CD4-positive, alpha-beta T cell (primary cell): ENCODE measurements at regions of chr14 and their contacts with region 1.

Region 1: DNA sequence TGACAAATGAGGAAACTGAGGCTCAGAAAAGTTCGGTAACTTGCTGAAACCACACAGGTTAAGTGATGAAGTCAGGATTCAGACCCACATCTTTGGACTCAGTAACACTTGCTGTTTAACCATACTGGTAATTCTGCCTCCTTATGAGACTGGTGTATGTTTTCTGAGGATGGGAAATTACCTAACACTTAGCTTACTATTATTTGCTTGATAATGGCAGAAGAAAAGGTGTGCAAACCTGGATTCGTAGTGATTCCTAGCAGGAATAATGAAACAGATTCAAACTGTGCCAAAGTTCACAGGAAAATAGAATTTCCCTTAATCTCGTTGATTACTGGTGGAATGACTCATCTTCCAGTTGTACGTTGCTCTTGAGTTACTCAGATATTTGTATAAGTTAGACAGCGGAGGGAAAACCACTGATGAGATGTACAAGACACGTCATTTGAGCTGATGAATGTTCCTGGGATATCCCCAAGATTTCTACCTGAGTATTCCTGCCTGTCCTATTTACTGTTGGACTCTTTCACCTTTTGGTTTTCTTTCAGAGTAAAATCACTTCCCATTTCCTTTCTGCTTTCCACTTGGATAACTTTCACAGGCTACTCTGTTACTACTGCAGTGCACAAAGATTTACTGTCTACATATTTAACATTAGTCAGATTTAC is 37.5 kb downstream of the PRORP start:
- DNase-seq: peak in 2 of 14 experiments; percentile 33 to 45
- ATAC-seq: no peak
- H3K4me3 ChIP-seq: no peak overlapping the region
- H3K4me3 Mint-ChIP-seq: no peak overlapping the region
- H3K27ac ChIP-seq: peak overlapping the region in 1 of 2 donors; percentile 5
- H3K27ac Mint-ChIP-seq: peak overlapping the region; percentile 20
- H3K4me1 ChIP-seq: peaks cover 8% of the 10 kb centered on the region
- H3K4me1 Mint-ChIP-seq: peaks cover 52% of the 10 kb centered on the region
- H3K27me3 ChIP-seq: no peaks in the 10 kb centered on the region
- H3K27me3 Mint-ChIP-seq: no peaks in the 10 kb centered on the region
- CTCF ChIP-seq: no peak

Region 2: GRCh38 chr14:35201066-35201465 is 41.2 kb after region 1 on chr14:
- CTCF ChIA-PET with region 1: no interaction called
- POLR2A ChIA-PET with region 1: no interaction called
- intact Hi-C with region 1: loop called in 1 of 2 experiments (anchors 5 kb)
- DNase-seq: peak in 4 of 14 experiments; percentile 23 to 66 (median 45)
- ATAC-seq: peak; percentile 33
- H3K4me3 ChIP-seq: no peak overlapping the region
- H3K4me3 Mint-ChIP-seq: peak overlapping the region; percentile 82
- H3K27ac ChIP-seq: peak overlapping the region in 1 of 2 donors; percentile 23
- H3K27ac Mint-ChIP-seq: peak overlapping the region; percentile 78
- H3K4me1 ChIP-seq: peaks cover 31% of the 10 kb centered on the region
- H3K4me1 Mint-ChIP-seq: peaks cover 52% of the 10 kb centered on the region
- H3K27me3 ChIP-seq: no peaks in the 10 kb centered on the region
- H3K27me3 Mint-ChIP-seq: no peaks in the 10 kb centered on the region
- CTCF ChIP-seq: no peak